ENCODE measurements at regions of chr17 and their contacts with region 1.

Region 1: DNA sequence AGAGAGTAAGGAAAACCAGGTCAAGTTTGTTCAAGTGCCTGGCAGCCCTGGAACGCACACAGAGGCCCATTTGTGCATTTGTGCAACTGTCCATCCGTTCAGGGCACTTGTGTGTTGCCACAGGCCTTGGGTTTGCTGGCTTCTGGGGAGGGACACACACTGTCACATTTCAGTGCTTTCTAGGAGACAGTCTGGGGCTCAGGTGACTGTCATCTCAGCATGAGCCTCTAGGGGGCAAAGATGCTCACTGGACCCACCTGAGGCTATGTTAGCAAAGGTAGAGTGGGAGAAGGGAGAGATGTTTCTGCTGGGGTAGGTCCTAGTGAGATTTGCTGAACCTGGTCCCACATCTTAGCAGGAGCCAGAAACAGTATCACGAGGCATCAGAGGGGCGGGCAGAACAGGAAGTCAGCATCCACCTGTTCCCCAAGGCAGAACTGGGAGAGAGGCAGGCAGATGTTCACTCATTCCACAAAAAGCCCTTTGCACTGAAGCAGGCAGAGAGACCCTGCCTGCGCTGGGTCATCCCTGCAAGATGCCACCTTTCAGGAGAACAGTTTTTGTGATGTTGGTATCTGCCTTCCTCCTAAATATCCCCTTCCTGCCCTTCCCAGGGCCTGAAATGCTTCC is 48.5 kb downstream of the RAI1 start:
- DNase-seq: no peak
- ATAC-seq: no peak

Region 2: DNA sequence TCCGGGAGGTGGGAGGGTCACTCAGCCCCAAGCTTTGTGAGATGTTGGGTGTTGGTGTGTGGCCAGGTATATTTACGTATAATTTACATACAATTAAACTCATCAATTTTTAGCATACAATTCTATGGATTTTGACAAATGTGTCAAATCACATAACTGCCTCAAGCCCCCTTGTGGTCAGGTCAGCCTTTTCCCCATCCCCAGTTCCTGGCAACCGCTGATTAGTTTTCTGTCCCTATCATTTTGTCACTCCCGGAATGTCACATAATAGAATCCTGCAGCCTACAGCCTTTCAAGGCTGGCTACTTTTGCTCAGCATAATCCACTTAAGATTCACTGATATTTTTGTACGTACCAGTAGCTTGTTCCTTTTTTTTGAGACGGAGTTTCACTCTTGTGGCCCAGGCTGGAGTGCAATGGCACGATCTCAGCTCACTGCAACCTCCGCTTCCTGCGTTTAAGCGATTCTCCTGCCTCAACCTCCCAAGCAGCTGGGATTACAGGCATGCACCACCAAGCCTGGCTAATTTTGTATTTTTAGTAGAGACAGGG is 67.8 kb before region 1 on chr17:
- intact Hi-C with region 1: no loop called
- DNase-seq: no peak
- ATAC-seq: no peak

Region 3: DNA sequence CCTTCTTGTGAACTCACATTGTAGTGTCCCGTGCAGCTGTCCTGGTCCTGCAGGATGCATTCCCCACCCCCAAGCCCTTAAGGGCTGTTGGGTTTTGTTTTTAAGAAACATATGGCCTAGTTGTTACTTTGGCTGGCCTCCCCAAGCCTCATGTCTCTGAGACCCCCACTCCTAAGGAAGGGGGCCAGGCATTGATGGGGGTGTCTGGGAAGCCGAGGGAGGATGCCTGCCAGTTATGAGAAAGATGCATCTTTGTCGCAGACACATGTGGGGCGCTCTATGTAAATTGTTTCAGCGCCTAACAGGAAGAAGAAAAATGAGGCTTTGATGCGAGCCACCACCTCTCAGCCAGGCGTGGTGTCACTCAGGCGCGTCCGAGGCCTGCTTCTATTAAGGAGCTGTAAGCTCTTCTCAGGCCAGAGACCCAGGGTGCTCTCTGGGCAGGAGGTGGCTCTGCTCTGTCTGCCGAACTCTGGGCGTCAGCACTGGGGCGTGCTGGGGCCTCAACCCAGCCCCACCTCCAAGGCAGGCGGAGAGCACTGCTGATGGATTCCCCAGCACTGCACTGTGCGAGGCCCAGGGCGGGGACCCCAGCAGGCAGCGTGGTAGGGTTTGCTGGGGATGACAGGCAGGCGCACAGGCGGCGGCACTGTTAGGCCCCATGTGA is 36.5 kb after region 1 on chr17:
- intact Hi-C with region 1: no loop called
- DNase-seq: no peak
- ATAC-seq: peak; percentile 76

Region 4: DNA sequence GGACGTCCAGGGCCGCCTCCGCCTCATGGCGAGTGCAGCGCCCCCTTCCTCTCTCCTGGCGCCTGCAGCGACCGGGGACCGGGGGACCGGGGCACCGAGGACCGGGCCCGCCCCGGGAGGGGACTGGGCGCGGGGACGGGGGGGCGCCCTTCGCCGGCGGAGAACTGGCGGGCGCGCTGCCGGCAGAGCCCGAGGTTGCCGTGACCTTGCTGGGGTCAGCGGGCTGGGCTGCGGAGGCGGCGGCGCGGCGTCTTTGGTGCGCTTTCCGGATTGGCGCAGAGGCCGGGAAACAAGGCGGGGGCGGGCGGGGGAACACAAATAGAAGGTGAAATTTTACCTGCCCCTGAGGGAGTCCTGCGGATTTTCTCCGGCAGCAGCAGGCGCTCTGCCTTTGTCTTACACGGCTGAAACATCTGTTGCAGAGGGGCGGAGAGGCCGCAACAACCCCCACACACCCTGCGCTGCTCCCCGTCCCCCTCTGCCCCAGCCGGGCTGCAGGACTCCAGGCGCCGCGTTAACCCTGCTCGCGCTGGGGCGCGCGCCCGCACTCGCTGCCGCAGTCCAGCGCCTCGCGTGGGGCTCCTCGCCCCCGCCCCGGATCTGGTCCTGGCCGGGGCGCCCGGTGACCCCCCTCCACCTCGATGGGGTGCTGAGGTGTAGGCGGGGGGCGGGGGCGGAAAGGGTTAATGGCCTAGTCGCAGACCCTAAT is 53.5 kb after region 1 on chr17:
- intact Hi-C with region 1: loop called (anchors 10 kb)
- DNase-seq: no peak
- ATAC-seq: no peak

Region 5: DNA sequence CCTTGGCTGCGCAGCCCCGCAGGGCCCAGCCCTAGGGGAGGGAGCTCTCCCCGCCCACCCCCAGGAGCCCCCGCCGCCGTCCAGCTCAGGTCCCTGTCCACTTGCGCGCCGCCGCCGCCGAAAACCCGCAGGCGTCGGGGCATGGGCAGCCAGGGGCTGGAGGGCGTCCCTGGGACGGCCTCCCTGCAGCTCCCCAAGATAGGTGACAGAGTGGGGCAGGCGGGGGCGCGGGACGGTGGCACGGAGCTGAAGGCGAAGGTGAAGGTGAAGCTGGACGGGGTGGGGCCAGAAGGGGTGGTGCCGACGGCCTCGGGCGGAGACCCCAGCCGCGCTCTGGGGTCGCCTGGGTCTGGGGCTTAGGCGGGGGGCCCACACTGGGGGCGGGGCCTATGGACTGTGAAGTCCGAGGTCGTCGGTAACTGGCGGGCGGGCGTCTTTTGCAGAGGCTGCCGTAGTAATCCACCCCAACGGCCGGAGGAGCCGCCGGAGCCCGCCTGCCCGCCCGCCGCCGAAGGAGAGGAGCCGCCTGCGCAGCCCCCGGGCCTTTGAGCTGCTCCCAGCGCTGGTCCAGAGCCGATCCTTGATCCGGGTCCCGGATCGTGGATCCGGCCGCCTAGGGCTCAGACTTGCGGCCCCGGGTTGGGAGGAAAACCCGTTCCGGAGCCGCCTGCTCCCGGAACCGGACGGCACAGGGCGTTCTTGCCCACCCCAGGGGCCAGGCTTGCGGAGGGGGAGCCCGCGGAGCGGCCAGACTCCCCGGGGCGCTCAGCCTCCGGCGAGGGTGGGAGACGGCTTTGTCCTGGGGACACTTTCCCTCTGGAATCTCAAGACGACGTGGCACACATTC is 80.0 kb after region 1 on chr17:
- intact Hi-C with region 1: no loop called
- DNase-seq: peak; percentile 83
- ATAC-seq: peak; percentile 70